Right cardiac atrium (tissue), 5 donors: ENCODE measurements at regions of chr1 and their contacts with region 1.

Region 1: GRCh38 chr1:204128964-204129896 is 22.6 kb downstream of the ETNK2 start:
- DNase-seq: peak; percentile 69 to 89 (median 85)
- ATAC-seq: peak; percentile 85 to 86
- H3K4me3 ChIP-seq: no peak overlapping the region
- H3K27ac ChIP-seq: no peak overlapping the region
- H3K4me1 ChIP-seq: peaks cover 4% of the 10 kb centered on the region
- H3K27me3 ChIP-seq: no peaks in the 10 kb centered on the region

Region 2: GRCh38 chr1:203861379-203862184 is 267.6 kb before region 1 on chr1 and contains the start of gene SNRPE:
- intact Hi-C with region 1: loop called in 1 of 4 experiments (anchors 5 kb)
- DNase-seq: peak; percentile 96 to 98 (median 97)
- ATAC-seq: peak; percentile 97 to 99
- H3K4me3 ChIP-seq: peak within 1 kb of the TSS; percentile 69
- H3K27ac ChIP-seq: peak within 1 kb of the TSS; percentile 10
- H3K4me1 ChIP-seq: no peaks in the 10 kb centered on the region
- H3K27me3 ChIP-seq: no peaks in the 10 kb centered on the region
- total RNA-seq, gene SNRPE: 48.7 to 59.7 (median 56.1) TPM

Region 3: DNA sequence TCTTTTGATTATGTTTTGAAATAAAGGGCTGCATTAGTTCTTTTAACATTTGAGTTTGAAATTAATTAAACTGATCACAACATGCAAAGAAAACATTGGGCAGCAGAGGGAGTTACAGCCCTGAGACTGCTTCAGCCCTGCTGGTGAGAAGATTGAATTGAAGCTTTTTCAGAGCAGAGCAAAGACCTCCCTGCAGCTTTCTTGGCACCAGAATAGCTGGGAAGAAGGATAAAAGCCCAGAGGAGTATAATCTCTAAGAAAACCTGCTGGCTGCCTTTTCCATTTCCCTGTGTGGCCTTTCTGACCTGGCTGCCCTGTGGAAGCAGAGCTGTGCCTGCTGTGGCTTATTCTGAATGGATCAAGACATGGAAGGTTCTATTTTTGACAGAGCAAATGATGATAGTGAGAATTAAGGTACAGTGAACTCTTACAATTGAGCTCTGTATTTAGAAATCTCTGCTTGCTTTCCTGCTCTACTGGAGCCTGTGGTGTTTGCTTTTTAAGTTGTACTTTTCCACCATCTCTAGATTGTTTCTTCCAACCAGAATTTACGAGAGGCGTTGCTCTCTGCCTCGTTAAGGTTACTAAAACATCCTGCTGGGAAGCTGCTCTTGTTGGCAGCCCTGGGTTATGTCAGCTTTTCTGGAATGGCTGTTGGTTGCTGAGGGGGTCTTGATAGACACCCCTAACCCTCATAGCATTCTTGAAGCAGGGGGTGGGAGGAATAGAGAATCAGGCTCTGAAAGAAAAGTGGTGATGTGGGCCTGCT is 257.9 kb before region 1 on chr1:
- intact Hi-C with region 1: loop called in 3 of 4 experiments (anchors 2 to 5 kb)
- DNase-seq: no peak
- ATAC-seq: peak; percentile 89 to 90
- H3K4me3 ChIP-seq: no peak overlapping the region
- H3K27ac ChIP-seq: no peak overlapping the region
- H3K4me1 ChIP-seq: no peaks in the 10 kb centered on the region
- H3K27me3 ChIP-seq: no peaks in the 10 kb centered on the region

Region 4: GRCh38 chr1:204072931-204073836 is 56.0 kb before region 1 on chr1 and contains the start of gene SOX13:
- intact Hi-C with region 1: loop called in 1 of 4 experiments (anchors 5 kb)
- DNase-seq: peak; percentile 89 to 96 (median 95)
- ATAC-seq: peak; percentile 84 to 89
- H3K4me3 ChIP-seq: peak within 1 kb of the TSS; percentile 89
- H3K27ac ChIP-seq: peak within 1 kb of the TSS; percentile 86
- H3K4me1 ChIP-seq: peaks cover 4% of the 10 kb centered on the region
- H3K27me3 ChIP-seq: no peaks in the 10 kb centered on the region
- total RNA-seq, gene SOX13: 11.4 to 17.9 (median 12.6) TPM

Region 5: DNA sequence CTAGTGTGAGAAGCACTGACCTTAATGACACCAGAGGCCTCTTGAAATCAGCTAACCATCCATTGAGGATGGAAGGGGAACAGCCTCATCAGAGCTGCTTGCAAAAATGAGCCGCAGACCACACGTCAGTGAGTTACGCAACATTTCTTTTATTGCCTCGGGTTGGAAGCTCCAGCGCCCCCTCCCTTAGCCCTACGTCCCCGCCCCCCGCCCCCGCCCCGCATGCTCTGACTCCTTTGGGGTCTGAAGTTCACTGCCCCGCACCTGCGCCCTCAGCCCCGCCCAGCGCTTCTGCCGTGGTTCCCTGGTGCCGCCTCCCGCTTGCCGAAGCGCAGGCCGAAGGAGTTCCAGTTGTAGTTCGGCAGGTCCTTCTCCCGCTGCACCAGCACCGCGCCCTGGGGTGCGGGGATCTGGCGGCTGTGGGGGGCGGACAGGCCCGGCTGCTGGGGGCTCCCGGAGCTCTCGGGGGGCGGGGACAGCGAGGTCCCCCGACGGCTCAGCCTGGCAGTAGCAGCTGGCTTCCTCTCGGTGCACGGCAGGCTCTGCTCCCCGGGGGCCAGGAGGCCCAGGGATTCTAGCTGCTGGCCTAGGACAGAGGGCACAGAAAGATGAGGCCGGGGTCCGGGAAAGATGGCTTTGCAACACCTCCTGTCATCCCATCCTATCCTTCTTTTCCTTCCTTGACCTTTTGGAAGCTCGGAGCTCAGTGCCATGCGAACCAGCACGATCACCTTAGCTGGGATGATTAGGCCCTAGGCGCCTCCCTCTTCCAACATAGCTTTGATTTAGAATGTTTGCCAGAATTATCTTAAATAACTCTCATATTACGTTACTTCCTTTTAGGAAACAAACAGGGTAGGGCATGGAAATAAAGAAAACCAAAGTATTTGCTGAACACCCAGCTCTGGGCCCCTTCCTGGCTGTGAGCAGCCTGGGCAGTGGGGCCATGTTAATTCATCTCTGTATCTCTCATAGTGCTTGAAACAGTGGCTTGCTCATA is 61.3 kb after region 1 on chr1:
- intact Hi-C with region 1: no loop called
- DNase-seq: peak; percentile 28 to 69 (median 52)
- ATAC-seq: peak; percentile 28 to 43
- H3K4me3 ChIP-seq: peak overlapping the region; percentile 18
- H3K27ac ChIP-seq: no peak overlapping the region
- H3K4me1 ChIP-seq: no peaks in the 10 kb centered on the region
- H3K27me3 ChIP-seq: no peaks in the 10 kb centered on the region